ENCODE measurements at regions of chr11 and their contacts with region 1.

Region 1: GRCh38 chr11:20127671-20128527 is 32.4 kb downstream of the DBX1 start:
- DNase-seq: peak; percentile 88
- ATAC-seq: peak; percentile 83
- H3K4me3 Mint-ChIP-seq: no peak overlapping the region
- H3K27ac Mint-ChIP-seq: no peak overlapping the region
- H3K4me1 Mint-ChIP-seq: peaks cover 10% of the 10 kb centered on the region
- H3K27me3 Mint-ChIP-seq: peaks cover 10% of the 10 kb centered on the region

Region 2: GRCh38 chr11:19951558-19952115 is 176.3 kb before region 1 on chr11:
- CTCF ChIA-PET with region 1: interaction called, 17 read pairs
- POLR2A ChIA-PET with region 1: no interaction called
- intact Hi-C with region 1: loop called (anchors 1 kb)
- DNase-seq: no peak
- ATAC-seq: peak; percentile 36
- H3K4me3 Mint-ChIP-seq: no peak overlapping the region
- H3K27ac Mint-ChIP-seq: no peak overlapping the region
- H3K4me1 Mint-ChIP-seq: peaks cover 8% of the 10 kb centered on the region
- H3K27me3 Mint-ChIP-seq: peaks cover 23% of the 10 kb centered on the region

Region 3: DNA sequence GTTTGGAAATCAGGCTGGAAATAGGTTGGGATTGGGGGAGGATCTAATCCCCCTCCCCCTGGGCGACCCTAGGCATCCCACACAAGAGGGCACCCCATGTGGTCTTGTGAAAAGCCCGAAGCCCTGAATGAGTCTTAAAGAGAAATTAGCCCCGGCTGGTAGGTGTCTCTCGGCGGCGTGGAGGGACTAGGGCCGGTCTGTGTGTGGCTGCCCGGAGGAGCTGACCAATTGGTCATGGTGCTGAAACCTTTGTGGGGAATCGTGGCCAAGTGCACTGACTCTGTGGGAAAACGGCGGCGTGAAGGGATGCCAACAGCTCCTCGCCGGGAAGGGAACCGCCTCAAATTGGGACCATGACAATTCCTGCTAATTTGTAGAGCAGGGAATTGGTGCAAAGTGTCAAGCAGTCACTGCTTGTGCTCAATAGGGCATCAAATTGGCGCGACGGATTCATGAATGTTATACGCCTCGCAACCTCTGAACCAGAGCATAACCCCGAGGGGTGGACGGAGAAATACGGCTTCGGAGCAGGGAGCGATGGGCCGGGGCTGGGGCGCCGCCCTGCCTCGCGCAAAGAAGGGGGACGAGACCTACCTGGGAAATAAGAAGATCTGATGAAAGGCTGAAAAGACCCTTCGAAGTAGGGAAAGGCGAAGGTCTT is 30.8 kb after region 1 on chr11:
- CTCF ChIA-PET with region 1: interaction called, 20 read pairs
- POLR2A ChIA-PET with region 1: no interaction called
- intact Hi-C with region 1: no loop called
- DNase-seq: peak; percentile 44
- ATAC-seq: no peak
- H3K4me3 Mint-ChIP-seq: no peak overlapping the region
- H3K27ac Mint-ChIP-seq: no peak overlapping the region
- H3K4me1 Mint-ChIP-seq: peaks cover 32% of the 10 kb centered on the region
- H3K27me3 Mint-ChIP-seq: peaks cover 69% of the 10 kb centered on the region

Region 4: DNA sequence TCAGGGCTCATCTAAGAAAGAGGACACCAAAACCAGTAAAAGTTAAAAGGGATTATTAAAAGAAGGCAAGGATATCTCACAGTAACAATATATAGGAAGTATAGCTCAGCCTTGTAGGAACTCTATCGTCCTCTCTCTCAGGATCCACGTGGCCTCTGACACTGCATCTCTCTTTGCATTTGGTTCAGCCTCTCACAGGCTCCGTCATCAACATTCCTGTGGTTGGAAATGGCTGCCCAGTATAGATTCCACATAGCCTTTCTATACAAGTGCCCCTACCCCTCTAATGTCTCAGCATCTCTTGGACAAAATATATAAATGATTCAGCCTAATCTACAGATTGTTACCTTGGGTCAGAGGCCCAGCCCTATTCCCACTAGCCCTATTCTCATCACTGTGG is 133.6 kb after region 1 on chr11:
- CTCF ChIA-PET with region 1: no interaction called
- POLR2A ChIA-PET with region 1: no interaction called
- intact Hi-C with region 1: no loop called
- DNase-seq: no peak
- ATAC-seq: no peak
- H3K4me3 Mint-ChIP-seq: no peak overlapping the region
- H3K27ac Mint-ChIP-seq: no peak overlapping the region
- H3K4me1 Mint-ChIP-seq: no peaks in the 10 kb centered on the region
- H3K27me3 Mint-ChIP-seq: peaks cover 15% of the 10 kb centered on the region

Region 5: GRCh38 chr11:20355221-20356219 is 227.6 kb after region 1 on chr11:
- CTCF ChIA-PET with region 1: interaction called, 109 read pairs
- POLR2A ChIA-PET with region 1: no interaction called
- intact Hi-C with region 1: loop called (anchors 1 kb)
- DNase-seq: peak; percentile 66
- ATAC-seq: peak; percentile 90
- H3K4me3 Mint-ChIP-seq: no peak overlapping the region
- H3K27ac Mint-ChIP-seq: no peak overlapping the region
- H3K4me1 Mint-ChIP-seq: peaks cover 8% of the 10 kb centered on the region
- H3K27me3 Mint-ChIP-seq: no peaks in the 10 kb centered on the region

Region 6: GRCh38 chr11:20443596-20443995 is 315.7 kb after region 1 on chr11:
- CTCF ChIA-PET with region 1: interaction called, 3 read pairs
- POLR2A ChIA-PET with region 1: no interaction called
- intact Hi-C with region 1: loop called in 1 of 2 experiments (anchors 5 kb)
- DNase-seq: no peak
- ATAC-seq: no peak
- H3K4me3 Mint-ChIP-seq: no peak overlapping the region
- H3K27ac Mint-ChIP-seq: no peak overlapping the region
- H3K4me1 Mint-ChIP-seq: no peaks in the 10 kb centered on the region
- H3K27me3 Mint-ChIP-seq: no peaks in the 10 kb centered on the region

Region 7: GRCh38 chr11:20671856-20672546 is 544.1 kb after region 1 on chr11:
- CTCF ChIA-PET with region 1: interaction called, 4 read pairs
- POLR2A ChIA-PET with region 1: no interaction called
- intact Hi-C with region 1: loop called in 1 of 2 experiments (anchors 2 kb)
- DNase-seq: no peak
- ATAC-seq: no peak
- H3K4me3 Mint-ChIP-seq: no peak overlapping the region
- H3K27ac Mint-ChIP-seq: no peak overlapping the region
- H3K4me1 Mint-ChIP-seq: peaks cover 5% of the 10 kb centered on the region
- H3K27me3 Mint-ChIP-seq: peaks cover 44% of the 10 kb centered on the region

Measured in activated CD4-positive, alpha-beta T cell treated with anti-CD3 and anti-CD28 coated beads for 36 hours (primary cell).